ENCODE measurements at regions of chr3 and their contacts with region 1.

Region 1: GRCh38 chr3:149393345-149394160 is 16.1 kb upstream of the TM4SF1 start:
- DNase-seq: peak; percentile 66 to 88 (median 78)
- ATAC-seq: peak; percentile 76 to 79
- H3K4me3 ChIP-seq: no peak overlapping the region
- H3K27ac ChIP-seq: no peak overlapping the region
- H3K4me1 ChIP-seq: no peaks in the 10 kb centered on the region
- H3K27me3 ChIP-seq: no peaks in the 10 kb centered on the region

Region 2: GRCh38 chr3:149352556-149352955 is 41.0 kb before region 1 on chr3:
- intact Hi-C with region 1: loop called in 1 of 4 experiments (anchors 2 kb)
- DNase-seq: peak; percentile 69 to 82 (median 73)
- ATAC-seq: peak; percentile 76 to 86
- H3K4me3 ChIP-seq: no peak overlapping the region
- H3K27ac ChIP-seq: no peak overlapping the region
- H3K4me1 ChIP-seq: peaks cover 2% of the 10 kb centered on the region
- H3K27me3 ChIP-seq: no peaks in the 10 kb centered on the region

Region 3: GRCh38 chr3:149417174-149417573 is 23.6 kb after region 1 on chr3:
- intact Hi-C with region 1: loop called in 1 of 4 experiments (anchors 2 kb)
- DNase-seq: no peak
- ATAC-seq: no peak
- H3K4me3 ChIP-seq: no peak overlapping the region
- H3K27ac ChIP-seq: no peak overlapping the region
- H3K4me1 ChIP-seq: peaks cover 2% of the 10 kb centered on the region
- H3K27me3 ChIP-seq: no peaks in the 10 kb centered on the region

Region 4: DNA sequence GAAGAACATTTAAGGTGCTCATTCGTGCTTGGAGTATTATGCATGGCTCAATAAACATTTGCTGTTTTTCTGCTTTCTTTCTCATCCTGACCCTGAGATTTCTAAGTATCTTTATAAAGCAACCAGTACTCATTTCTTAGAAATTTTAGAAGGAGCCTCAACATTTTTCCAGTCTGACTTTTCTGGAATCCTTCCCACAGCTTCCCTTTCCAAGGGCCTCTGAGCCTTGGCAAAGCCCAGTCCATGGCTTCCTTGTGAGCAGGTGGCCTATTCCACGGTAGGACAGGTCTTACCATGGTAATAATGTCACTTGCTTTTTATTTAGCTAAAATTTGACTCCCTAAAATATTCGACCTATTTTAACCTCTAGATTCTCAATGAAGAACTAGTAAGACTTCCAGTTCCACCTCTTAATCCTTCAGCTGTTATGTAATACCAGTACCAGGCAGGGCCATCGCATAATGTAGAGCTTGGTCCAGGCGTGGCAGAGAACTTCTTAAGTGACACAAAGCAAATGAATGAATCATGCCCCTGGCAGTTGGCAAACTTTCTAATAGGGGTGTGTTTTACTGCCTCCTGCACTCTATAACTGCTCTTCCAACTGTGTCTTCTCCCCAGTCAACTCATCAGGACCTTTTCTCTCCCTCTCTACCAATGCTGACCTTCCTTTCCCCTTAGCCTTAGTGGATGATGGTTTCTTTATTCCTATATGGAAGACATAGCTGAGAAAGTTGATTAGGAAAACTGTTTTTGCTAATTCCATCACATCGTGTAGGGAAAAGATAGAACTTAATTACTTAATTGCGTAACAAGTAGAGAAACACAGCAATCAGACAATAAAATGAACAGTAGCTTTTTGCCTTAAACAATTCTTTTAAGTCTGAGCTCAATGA is 80.0 kb after region 1 on chr3:
- intact Hi-C with region 1: loop called in 1 of 4 experiments (anchors 10 kb)
- DNase-seq: peak in 1 of 3 donors; percentile 19
- ATAC-seq: peak; percentile 60 to 63
- H3K4me3 ChIP-seq: no peak overlapping the region
- H3K27ac ChIP-seq: no peak overlapping the region
- H3K4me1 ChIP-seq: no peaks in the 10 kb centered on the region
- H3K27me3 ChIP-seq: no peaks in the 10 kb centered on the region

Region 5: GRCh38 chr3:149480325-149481017 is 86.9 kb after region 1 on chr3:
- intact Hi-C with region 1: loop called (anchors 5 to 10 kb)
- DNase-seq: peak; percentile 83 to 90 (median 87)
- ATAC-seq: peak; percentile 93 to 95
- H3K4me3 ChIP-seq: no peak overlapping the region
- H3K27ac ChIP-seq: peak overlapping the region; percentile 70
- H3K4me1 ChIP-seq: peaks cover 5% of the 10 kb centered on the region
- H3K27me3 ChIP-seq: no peaks in the 10 kb centered on the region

Measured in right cardiac atrium (tissue), 5 donors.